ENCODE measurements at regions of chr12 and their contacts with region 1.

Region 1: GRCh38 chr12:122051231-122051876 is 27.2 kb upstream of the MLXIP start:
- H3K4me3 ChIP-seq: no peak overlapping the region
- H3K27ac ChIP-seq: no peak overlapping the region
- H3K4me1 ChIP-seq: no peaks in the 10 kb centered on the region; the same call in 1 of the 2 replicates
- CTCF ChIP-seq: no peak

Region 2: GRCh38 chr12:121839106-121839992 is 212.0 kb before region 1 on chr12:
- CTCF ChIA-PET with region 1: no interaction called
- POLR2A ChIA-PET with region 1: no interaction called
- H3K4me3 ChIP-seq: peak overlapping the region; percentile 55
- H3K27ac ChIP-seq: peak overlapping the region; percentile 46; the same call in 1 of the 2 replicates
- H3K4me1 ChIP-seq: peaks cover 5% of the 10 kb centered on the region; the same call in 1 of the 2 replicates
- CTCF ChIP-seq: peak; percentile 92

Region 3: DNA sequence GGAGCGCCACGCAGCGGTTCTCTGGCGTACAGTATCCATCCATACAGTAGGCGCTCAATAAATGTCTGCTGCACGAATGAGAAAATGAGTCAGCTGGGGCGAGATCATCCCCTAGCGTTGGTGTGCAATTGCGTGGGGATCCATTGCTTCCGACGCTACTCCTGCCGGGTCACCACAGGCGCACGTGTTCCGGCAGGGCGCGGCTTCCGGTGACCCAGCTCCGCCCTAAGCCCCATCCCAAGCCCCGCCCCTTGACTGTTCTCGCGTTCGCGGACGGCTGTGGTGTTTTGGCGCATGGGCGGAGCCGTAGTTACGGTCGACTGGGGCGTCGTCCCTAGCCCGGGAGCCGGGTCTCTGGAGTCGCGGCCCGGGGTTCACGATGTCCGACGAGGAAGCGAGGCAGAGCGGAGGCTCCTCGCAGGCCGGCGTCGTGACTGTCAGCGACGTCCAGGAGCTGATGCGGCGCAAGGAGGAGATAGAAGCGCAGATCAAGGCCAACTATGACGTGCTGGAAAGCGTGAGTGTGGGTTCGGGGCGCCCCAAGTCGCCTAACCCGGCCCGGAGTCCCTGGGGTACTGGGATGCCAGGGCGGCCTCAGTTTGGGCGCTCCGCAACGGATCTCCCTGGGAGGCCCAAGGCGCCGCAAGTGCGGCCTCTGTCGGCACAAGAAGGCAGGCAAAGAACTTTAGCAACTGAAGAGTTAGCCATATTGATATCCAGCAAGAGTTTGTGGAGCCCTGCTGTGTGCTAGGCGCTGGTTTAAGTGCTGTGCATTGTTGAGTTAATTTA is 162.7 kb before region 1 on chr12 and contains the start of gene PSMD9:
- CTCF ChIA-PET with region 1: no interaction called
- POLR2A ChIA-PET with region 1: no interaction called
- H3K4me3 ChIP-seq: peak within 1 kb of the TSS; percentile 81
- H3K27ac ChIP-seq: peak within 1 kb of the TSS; percentile 84
- H3K4me1 ChIP-seq: peaks cover 9% of the 10 kb centered on the region; the same call in 1 of the 2 replicates
- CTCF ChIP-seq: peak; percentile 97

Region 4: GRCh38 chr12:122003651-122004611 is 47.4 kb before region 1 on chr12:
- CTCF ChIA-PET with region 1: no interaction called
- POLR2A ChIA-PET with region 1: no interaction called
- H3K4me3 ChIP-seq: no peak overlapping the region
- H3K27ac ChIP-seq: no peak overlapping the region
- H3K4me1 ChIP-seq: no peaks in the 10 kb centered on the region
- CTCF ChIP-seq: no peak

Region 5: GRCh38 chr12:122064025-122064777 is 12.8 kb after region 1 on chr12:
- CTCF ChIA-PET with region 1: interaction called, 20 read pairs
- POLR2A ChIA-PET with region 1: interaction called, 4 read pairs
- H3K4me3 ChIP-seq: no peak overlapping the region
- H3K27ac ChIP-seq: peak overlapping the region; percentile 89; the same call in 1 of the 2 replicates
- H3K4me1 ChIP-seq: peaks cover 22% of the 10 kb centered on the region
- CTCF ChIP-seq: peak; percentile 78

Region 6: GRCh38 chr12:122072031-122072970 is 20.9 kb after region 1 on chr12:
- CTCF ChIA-PET with region 1: interaction called, 12 read pairs
- POLR2A ChIA-PET with region 1: no interaction called
- H3K4me3 ChIP-seq: no peak overlapping the region; the same call in 1 of the 2 replicates
- H3K27ac ChIP-seq: peak overlapping the region; percentile 62
- H3K4me1 ChIP-seq: peaks cover 9% of the 10 kb centered on the region
- CTCF ChIP-seq: no peak

Region 7: GRCh38 chr12:122190842-122191668 is 139.7 kb after region 1 on chr12:
- CTCF ChIA-PET with region 1: interaction called, 10 read pairs
- POLR2A ChIA-PET with region 1: no interaction called
- H3K4me3 ChIP-seq: no peak overlapping the region
- H3K27ac ChIP-seq: no peak overlapping the region
- H3K4me1 ChIP-seq: no peaks in the 10 kb centered on the region
- CTCF ChIP-seq: peak; percentile 62